CD14-positive monocyte (primary cell): ENCODE measurements at regions of chrX and their contacts with region 1.

Region 1: DNA sequence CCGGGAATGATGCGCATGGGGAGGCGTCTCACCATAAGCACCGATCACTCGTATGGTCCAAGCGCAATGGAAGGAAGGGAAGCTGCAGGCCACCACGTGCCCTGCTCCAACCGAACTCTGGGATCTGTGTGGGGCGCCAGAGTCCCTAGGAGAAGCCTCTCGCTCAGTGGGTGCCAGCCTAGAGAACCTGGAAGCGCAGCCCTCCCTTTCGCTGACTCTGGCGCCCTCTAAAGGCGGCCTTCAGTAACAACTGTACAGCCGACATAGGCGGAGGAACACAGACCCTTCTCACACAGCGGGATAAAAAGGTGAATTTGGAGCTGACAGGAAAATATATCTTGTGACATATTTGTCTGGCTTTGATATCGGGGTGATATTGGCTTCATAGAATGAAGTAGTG is 76.0 kb downstream of the INTS6L start:
- DNase-seq: peak; percentile 23 to 35 (median 25)
- H3K4me3 ChIP-seq: no peak overlapping the region
- H3K4me3 Mint-ChIP-seq: no peak overlapping the region
- H3K27ac ChIP-seq: no peak overlapping the region
- H3K27ac Mint-ChIP-seq: no peak overlapping the region
- H3K4me1 ChIP-seq: no peaks in the 10 kb centered on the region
- H3K4me1 Mint-ChIP-seq: no peaks in the 10 kb centered on the region
- H3K27me3 ChIP-seq: no peaks in the 10 kb centered on the region
- H3K27me3 Mint-ChIP-seq: peaks cover 0 to 6% (median 5%) of the 10 kb centered on the region in 3 donors
- CTCF ChIP-seq: peak; percentile 69

Region 2: DNA sequence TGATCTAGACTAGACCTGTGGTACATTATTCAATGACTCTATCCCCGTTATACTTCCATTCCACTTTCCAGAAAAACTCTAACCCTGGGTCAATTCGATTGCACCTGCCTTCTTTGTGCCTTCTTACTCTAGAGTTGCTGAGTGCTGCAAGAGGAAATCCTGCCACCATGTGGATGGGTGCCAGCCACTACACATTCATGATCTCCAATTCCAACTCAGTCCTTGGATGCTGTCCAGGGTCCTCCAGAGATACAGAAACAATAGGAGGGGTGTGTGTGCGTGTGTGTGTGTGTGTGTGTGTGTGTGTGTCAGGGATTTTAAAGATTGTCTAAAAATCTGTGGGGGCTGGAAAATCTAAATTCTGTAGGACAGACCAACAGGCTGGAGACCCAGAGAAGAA is 118.9 kb before region 1 on chrX:
- intact Hi-C with region 1: loop called in 1 of 2 experiments (anchors 10 kb)
- DNase-seq: peak in 2 of 3 donors; percentile 1 to 4
- H3K4me3 ChIP-seq: no peak overlapping the region
- H3K4me3 Mint-ChIP-seq: no peak overlapping the region
- H3K27ac ChIP-seq: no peak overlapping the region
- H3K27ac Mint-ChIP-seq: no peak overlapping the region
- H3K4me1 ChIP-seq: no peaks in the 10 kb centered on the region
- H3K4me1 Mint-ChIP-seq: no peaks in the 10 kb centered on the region
- H3K27me3 ChIP-seq: peaks cover 0 to 6% of the 10 kb centered on the region in 2 donors
- H3K27me3 Mint-ChIP-seq: peaks cover 2 to 8% (median 8%) of the 10 kb centered on the region in 3 donors
- CTCF ChIP-seq: peak; percentile 6